ENCODE measurements at regions of chr11 and their contacts with region 1.

Region 1: DNA sequence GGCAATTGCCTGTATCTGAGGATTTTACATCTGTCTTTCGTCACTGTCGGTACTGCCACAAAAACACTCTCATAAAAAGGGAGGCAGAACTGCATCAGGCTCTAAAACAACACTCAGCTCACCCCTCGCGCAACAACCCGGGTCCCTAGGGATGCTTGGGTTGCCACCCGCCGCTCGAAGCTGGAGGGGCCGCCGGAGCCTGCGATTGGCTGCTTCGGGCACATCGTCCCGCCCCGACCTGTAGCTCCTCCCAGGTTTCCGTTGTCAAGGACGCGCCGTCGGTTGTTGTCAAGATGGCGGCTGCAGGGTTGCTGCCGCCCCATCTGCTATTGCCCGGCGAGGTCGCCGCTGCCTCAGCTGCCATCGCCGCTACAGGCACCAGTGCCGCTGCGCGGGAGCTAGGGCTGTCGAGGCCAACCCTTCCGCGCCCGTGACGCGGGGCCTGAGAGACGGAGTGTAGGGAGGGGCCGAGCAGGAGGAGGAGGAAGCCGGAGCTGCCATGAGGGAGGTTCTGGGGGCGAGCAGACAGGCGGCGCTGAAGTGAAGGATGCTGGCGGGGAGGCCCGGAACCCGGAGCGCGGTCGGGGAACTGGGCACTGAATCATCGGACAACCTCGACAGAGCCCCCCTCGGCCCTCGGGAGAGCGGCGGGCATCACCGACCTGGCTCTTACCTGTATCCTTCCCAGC is at the start of gene CEP126:
- DNase-seq: peak; percentile 89 to 96 (median 92)
- ATAC-seq: peak; percentile 93
- H3K4me3 ChIP-seq: peak within 1 kb of the TSS; percentile 78
- H3K4me3 Mint-ChIP-seq: peak within 1 kb of the TSS; percentile 90 to 97 (median 94)
- H3K27ac ChIP-seq: peak within 1 kb of the TSS; percentile 68
- H3K27ac Mint-ChIP-seq: peak within 1 kb of the TSS; percentile 79 to 95 (median 89)
- H3K4me1 ChIP-seq: peaks cover 10 to 13% of the 10 kb centered on the region in 2 donors
- H3K4me1 Mint-ChIP-seq: peaks cover 18 to 30% (median 26%) of the 10 kb centered on the region in 7 donors
- H3K27me3 ChIP-seq: no peaks in the 10 kb centered on the region
- H3K27me3 Mint-ChIP-seq: peaks cover 0 to 6% (median 0%) of the 10 kb centered on the region in 5 donors
- total RNA-seq, gene CEP126: 0.39 to 3.4 (median 2.6) TPM

Region 2: DNA sequence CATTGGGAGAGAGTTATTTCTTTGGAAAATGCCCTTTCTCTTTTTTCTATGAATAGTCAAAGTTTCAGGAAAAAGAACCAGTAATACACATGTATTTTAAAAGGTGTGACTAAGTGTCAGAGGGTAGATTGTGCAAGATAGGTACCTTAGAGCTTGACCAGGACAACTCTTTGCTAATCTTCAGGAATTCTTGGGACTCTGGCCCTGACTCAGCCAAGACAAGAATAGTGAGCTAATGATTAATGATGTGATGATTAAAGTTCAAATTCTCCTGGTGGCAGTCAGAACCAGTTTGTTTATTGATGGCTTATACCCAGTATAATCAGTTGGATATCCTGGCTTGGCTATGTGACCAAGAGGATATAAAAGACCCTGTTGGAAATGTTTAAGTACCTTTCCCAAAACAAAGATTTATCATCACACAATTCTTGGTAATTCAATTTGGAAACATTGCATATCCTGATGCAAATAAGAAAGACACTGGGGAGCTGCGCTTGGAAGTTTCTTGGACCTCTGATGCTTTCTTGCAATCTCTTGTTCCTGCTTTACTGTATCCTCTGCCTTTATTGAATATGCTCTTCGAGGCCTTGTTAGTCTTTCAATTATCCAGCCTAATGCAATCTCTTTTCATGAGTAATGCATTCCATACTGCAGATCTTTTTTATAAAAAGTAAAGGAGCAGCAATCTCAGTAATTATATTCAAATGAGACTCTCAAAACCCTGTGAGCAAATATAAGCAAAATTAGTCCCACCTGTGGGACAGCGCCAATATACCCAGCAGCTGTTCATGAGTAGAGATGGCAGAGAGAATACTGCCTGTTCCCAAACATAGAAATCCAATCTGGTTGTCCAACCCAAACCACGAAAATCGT is 48.0 kb before region 1 on chr11:
- CTCF ChIA-PET with region 1: no interaction called
- POLR2A ChIA-PET with region 1: no interaction called
- intact Hi-C with region 1: no loop called
- DNase-seq: no peak
- ATAC-seq: no peak
- H3K4me3 ChIP-seq: no peak overlapping the region
- H3K4me3 Mint-ChIP-seq: no peak overlapping the region
- H3K27ac ChIP-seq: no peak overlapping the region
- H3K27ac Mint-ChIP-seq: no peak overlapping the region
- H3K4me1 ChIP-seq: no peaks in the 10 kb centered on the region
- H3K4me1 Mint-ChIP-seq: no peaks in the 10 kb centered on the region
- H3K27me3 ChIP-seq: peaks cover 0 to 4% of the 10 kb centered on the region in 2 donors
- H3K27me3 Mint-ChIP-seq: peaks cover 2 to 33% (median 24%) of the 10 kb centered on the region in 5 donors

Region 3: GRCh38 chr11:102007567-102008437 is 92.9 kb after region 1 on chr11:
- CTCF ChIA-PET with region 1: interaction called, 5 read pairs
- POLR2A ChIA-PET with region 1: no interaction called
- intact Hi-C with region 1: loop called (anchors 1 to 2 kb)
- DNase-seq: peak in 6 of 9 donors; percentile 10 to 48 (median 39)
- ATAC-seq: peak; percentile 61
- H3K4me3 ChIP-seq: no peak overlapping the region
- H3K4me3 Mint-ChIP-seq: no peak overlapping the region
- H3K27ac ChIP-seq: no peak overlapping the region
- H3K27ac Mint-ChIP-seq: no peak overlapping the region
- H3K4me1 ChIP-seq: no peaks in the 10 kb centered on the region
- H3K4me1 Mint-ChIP-seq: peaks cover 0 to 6% (median 5%) of the 10 kb centered on the region in 7 donors
- H3K27me3 ChIP-seq: no peaks in the 10 kb centered on the region
- H3K27me3 Mint-ChIP-seq: peaks cover 7 to 19% (median 13%) of the 10 kb centered on the region in 5 donors

Region 4: DNA sequence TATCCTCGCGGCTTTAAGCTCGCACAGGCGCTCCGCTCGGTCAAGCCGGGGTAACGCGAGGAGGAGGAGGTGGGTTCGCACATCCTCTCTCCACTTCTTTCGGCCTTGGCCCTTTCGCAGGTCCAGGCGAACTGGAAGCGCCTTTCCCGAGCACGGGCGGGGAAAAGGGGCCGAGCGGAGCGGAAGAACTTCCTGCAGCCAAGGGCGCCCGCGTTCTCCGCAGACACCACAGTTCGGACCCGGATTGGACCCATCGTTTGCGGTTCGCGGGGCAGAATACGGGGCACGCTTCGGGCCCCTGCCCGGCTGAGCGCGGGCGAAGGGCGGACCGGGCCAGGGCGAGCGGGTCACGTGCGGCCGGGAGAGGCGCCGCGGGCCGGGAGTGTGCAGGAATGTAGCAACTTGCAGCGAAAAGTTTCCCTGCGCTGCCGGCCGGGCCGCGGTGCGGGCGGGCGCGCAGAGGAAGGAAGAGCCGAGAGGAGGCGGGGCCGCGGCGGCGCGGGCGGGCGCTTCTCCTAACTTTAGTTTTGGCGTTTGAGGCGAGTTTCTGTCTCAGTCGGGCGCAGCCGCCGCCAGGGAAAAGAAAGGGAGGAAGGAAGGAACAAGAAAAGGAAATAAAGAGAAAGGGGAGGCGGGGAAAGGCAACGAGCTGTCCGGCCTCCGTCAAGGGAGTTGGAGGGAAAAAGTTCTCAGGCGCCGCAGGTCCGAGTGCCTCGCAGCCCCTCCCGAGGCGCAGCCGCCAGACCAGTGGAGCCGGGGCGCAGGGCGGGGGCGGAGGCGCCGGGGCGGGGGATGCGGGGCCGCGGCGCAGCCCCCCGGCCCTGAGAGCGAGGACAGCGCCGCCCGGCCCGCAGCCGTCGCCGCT is 195.2 kb after region 1 on chr11 and contains the start of gene YAP1:
- CTCF ChIA-PET with region 1: no interaction called
- POLR2A ChIA-PET with region 1: no interaction called
- intact Hi-C with region 1: loop called (anchors 2 kb)
- DNase-seq: peak; percentile 26 to 70 (median 55)
- ATAC-seq: peak; percentile 85
- H3K4me3 ChIP-seq: peak within 1 kb of the TSS; percentile 69
- H3K4me3 Mint-ChIP-seq: peak within 1 kb of the TSS; percentile 88 to 98 (median 94)
- H3K27ac ChIP-seq: no peak within 1 kb of the TSS
- H3K27ac Mint-ChIP-seq: peak within 1 kb of the TSS in 3 of 9 donors; percentile 25 to 77 (median 65)
- H3K4me1 ChIP-seq: peaks cover 0 to 6% of the 10 kb centered on the region in 2 donors
- H3K4me1 Mint-ChIP-seq: peaks cover 5 to 18% (median 11%) of the 10 kb centered on the region in 7 donors
- H3K27me3 ChIP-seq: peaks cover 3% of the 10 kb centered on the region in 2 donors
- H3K27me3 Mint-ChIP-seq: peaks cover 26 to 64% (median 58%) of the 10 kb centered on the region in 5 donors
- total RNA-seq, gene YAP1: 0.15 TPM in 1 of 5 experiments, not detected in the others

Region 5: DNA sequence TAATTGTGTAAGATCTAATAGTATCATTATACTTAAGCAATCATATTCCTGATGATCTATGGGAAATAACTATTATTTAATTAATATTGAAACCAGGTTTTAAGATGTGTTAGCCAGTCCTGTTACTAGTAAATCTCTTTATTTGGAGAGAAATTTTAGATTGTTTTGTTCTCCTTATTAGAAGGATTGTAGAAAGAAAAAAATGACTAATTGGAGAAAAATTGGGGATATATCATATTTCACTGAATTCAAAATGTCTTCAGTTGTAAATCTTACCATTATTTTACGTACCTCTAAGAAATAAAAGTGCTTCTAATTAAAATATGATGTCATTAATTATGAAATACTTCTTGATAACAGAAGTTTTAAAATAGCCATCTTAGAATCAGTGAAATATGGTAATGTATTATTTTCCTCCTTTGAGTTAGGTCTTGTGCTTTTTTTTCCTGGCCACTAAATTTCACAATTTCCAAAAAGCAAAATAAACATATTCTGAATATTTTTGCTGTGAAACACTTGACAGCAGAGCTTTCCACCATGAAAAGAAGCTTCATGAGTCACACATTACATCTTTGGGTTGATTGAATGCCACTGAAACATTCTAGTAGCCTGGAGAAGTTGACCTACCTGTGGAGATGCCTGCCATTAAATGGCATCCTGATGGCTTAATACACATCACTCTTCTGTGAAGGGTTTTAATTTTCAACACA is 408.8 kb after region 1 on chr11:
- CTCF ChIA-PET with region 1: no interaction called
- POLR2A ChIA-PET with region 1: no interaction called
- intact Hi-C with region 1: loop called in 1 of 2 experiments (anchors 5 kb)
- DNase-seq: no peak
- ATAC-seq: no peak
- H3K4me3 ChIP-seq: no peak overlapping the region
- H3K4me3 Mint-ChIP-seq: peak overlapping the region in 4 of 10 donors; percentile 7 to 81 (median 46)
- H3K27ac ChIP-seq: peak overlapping the region; percentile 56
- H3K27ac Mint-ChIP-seq: peak overlapping the region in 7 of 9 donors; percentile 42 to 94 (median 67)
- H3K4me1 ChIP-seq: peaks cover 23 to 39% of the 10 kb centered on the region in 2 donors
- H3K4me1 Mint-ChIP-seq: peaks cover 33 to 76% (median 63%) of the 10 kb centered on the region in 7 donors
- H3K27me3 ChIP-seq: no peaks in the 10 kb centered on the region
- H3K27me3 Mint-ChIP-seq: no peaks in the 10 kb centered on the region

Region 6: DNA sequence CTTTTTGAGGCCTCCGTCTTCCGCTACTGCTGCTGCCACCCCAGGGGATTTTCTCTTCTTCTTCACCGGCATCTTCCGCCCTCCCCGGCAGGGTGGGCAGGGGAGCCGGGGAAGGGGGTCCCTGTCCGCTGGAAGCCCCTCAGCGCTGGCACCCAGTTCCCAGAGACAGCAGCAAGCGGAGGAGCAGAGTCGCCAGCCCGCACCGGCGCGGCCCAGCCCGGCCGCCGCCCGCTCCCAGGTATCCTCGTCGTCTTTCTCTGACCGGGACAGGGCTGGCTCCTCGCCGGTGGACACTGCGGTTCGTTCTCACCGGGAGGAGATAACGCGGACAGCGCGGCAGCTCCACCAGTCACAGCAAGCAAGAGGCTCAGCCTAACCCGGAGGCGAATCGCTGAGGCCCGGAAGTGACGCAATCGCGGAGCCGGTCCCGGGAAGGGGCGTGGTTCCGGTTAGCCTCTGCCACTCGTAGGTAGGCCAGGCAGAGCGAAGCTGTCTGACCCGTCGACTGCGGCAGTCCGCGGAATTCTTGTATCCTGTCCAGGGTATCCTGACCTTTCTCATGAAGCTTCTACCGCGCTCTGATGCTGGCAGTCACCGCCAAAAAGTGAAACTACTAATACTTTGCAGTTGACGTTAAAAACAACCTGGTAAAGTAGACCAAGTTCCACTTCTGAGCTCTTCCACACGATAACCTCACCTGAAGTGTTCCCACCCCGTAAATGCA is 1177.1 kb after region 1 on chr11 and contains the start of gene DCUN1D5:
- CTCF ChIA-PET with region 1: no interaction called
- POLR2A ChIA-PET with region 1: no interaction called
- intact Hi-C with region 1: loop called (anchors 5 kb)
- DNase-seq: peak; percentile 89 to 94 (median 93)
- ATAC-seq: peak; percentile 99
- H3K4me3 ChIP-seq: peak within 1 kb of the TSS; percentile 93
- H3K4me3 Mint-ChIP-seq: peak within 1 kb of the TSS; percentile 79 to 98 (median 92)
- H3K27ac ChIP-seq: peak within 1 kb of the TSS; percentile 89
- H3K27ac Mint-ChIP-seq: peak within 1 kb of the TSS; percentile 89 to 99 (median 97)
- H3K4me1 ChIP-seq: peaks cover 15 to 25% of the 10 kb centered on the region in 2 donors
- H3K4me1 Mint-ChIP-seq: peaks cover 16 to 40% (median 34%) of the 10 kb centered on the region in 7 donors
- H3K27me3 ChIP-seq: peaks cover 0 to 3% of the 10 kb centered on the region in 2 donors
- H3K27me3 Mint-ChIP-seq: peaks cover 22 to 35% (median 26%) of the 10 kb centered on the region in 5 donors
- total RNA-seq, gene DCUN1D5: 12.2 to 28.5 (median 14.2) TPM

Region 7: GRCh38 chr11:103108933-103109817 is 1194.3 kb after region 1 on chr11 and contains the start of gene DYNC2H1:
- CTCF ChIA-PET with region 1: no interaction called
- POLR2A ChIA-PET with region 1: no interaction called
- intact Hi-C with region 1: loop called (anchors 2 to 5 kb)
- DNase-seq: peak; percentile 78 to 91 (median 89)
- ATAC-seq: peak; percentile 99
- H3K4me3 ChIP-seq: peak within 1 kb of the TSS; percentile 93
- H3K4me3 Mint-ChIP-seq: peak within 1 kb of the TSS; percentile 87 to 99 (median 94)
- H3K27ac ChIP-seq: peak within 1 kb of the TSS; percentile 60
- H3K27ac Mint-ChIP-seq: peak within 1 kb of the TSS; percentile 87 to 99 (median 92)
- H3K4me1 ChIP-seq: peaks cover 4 to 6% of the 10 kb centered on the region in 2 donors
- H3K4me1 Mint-ChIP-seq: peaks cover 5 to 19% (median 13%) of the 10 kb centered on the region in 7 donors
- H3K27me3 ChIP-seq: no peaks in the 10 kb centered on the region
- H3K27me3 Mint-ChIP-seq: peaks cover 6 to 42% (median 7%) of the 10 kb centered on the region in 5 donors
- total RNA-seq, gene DYNC2H1: 1.5 to 4.2 (median 3.0) TPM